ENCODE measurements at regions of chr4 and their contacts with region 1.

Region 1: GRCh38 chr4:121900132-121900983 is 30.1 kb upstream of the BBS7 start:
- DNase-seq: peak; percentile 44 to 62
- H3K4me3 ChIP-seq: no peak overlapping the region
- H3K4me3 Mint-ChIP-seq: no peak overlapping the region
- H3K27ac Mint-ChIP-seq: no peak overlapping the region
- H3K4me1 ChIP-seq: no peaks in the 10 kb centered on the region
- H3K4me1 Mint-ChIP-seq: no peaks in the 10 kb centered on the region
- H3K27me3 ChIP-seq: no peaks in the 10 kb centered on the region
- H3K27me3 Mint-ChIP-seq: peaks cover 5% of the 10 kb centered on the region
- CTCF ChIP-seq: peak; percentile 73 to 74

Region 2: GRCh38 chr4:121758925-121759568 is 141.3 kb before region 1 on chr4:
- CTCF ChIA-PET with region 1: no interaction called
- POLR2A ChIA-PET with region 1: no interaction called
- intact Hi-C with region 1: no loop called
- DNase-seq: no peak
- H3K4me3 ChIP-seq: no peak overlapping the region
- H3K4me3 Mint-ChIP-seq: no peak overlapping the region
- H3K27ac Mint-ChIP-seq: no peak overlapping the region
- H3K4me1 ChIP-seq: no peaks in the 10 kb centered on the region
- H3K4me1 Mint-ChIP-seq: no peaks in the 10 kb centered on the region
- H3K27me3 ChIP-seq: no peaks in the 10 kb centered on the region
- H3K27me3 Mint-ChIP-seq: peaks cover 7% of the 10 kb centered on the region
- CTCF ChIP-seq: no peak

Region 3: DNA sequence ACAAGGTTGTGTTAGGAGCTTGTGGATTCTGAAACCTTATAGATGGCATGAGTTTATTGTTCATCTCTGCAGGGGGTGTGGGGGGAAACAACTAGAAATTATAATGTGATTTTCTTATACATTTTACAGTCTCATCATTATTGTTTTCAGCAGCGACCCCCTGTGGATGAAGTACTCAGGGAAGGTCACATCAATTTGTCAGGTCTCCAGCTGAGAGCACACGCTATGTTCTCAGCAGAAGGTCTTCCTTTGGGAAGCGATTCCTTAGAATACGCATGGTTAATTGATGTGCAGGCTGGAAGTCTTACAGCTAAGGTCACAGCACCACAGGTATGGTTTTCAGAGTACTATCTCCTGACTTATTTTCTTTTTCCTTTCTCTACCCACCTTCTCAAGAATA is 324.0 kb after region 1 on chr4:
- CTCF ChIA-PET with region 1: interaction called, 7 read pairs
- POLR2A ChIA-PET with region 1: no interaction called
- intact Hi-C with region 1: loop called (anchors 5 kb)
- DNase-seq: peak in 1 of 2 experiments; percentile 12
- H3K4me3 ChIP-seq: no peak overlapping the region
- H3K4me3 Mint-ChIP-seq: no peak overlapping the region
- H3K27ac Mint-ChIP-seq: no peak overlapping the region
- H3K4me1 ChIP-seq: no peaks in the 10 kb centered on the region
- H3K4me1 Mint-ChIP-seq: no peaks in the 10 kb centered on the region
- H3K27me3 ChIP-seq: no peaks in the 10 kb centered on the region
- H3K27me3 Mint-ChIP-seq: no peaks in the 10 kb centered on the region
- CTCF ChIP-seq: peak in 1 of 2 experiments; percentile 25

Measured in Caco-2 (cell line).